AG04450 (cell line): ENCODE measurements at regions of chr1 and their contacts with region 1.

Region 1: DNA sequence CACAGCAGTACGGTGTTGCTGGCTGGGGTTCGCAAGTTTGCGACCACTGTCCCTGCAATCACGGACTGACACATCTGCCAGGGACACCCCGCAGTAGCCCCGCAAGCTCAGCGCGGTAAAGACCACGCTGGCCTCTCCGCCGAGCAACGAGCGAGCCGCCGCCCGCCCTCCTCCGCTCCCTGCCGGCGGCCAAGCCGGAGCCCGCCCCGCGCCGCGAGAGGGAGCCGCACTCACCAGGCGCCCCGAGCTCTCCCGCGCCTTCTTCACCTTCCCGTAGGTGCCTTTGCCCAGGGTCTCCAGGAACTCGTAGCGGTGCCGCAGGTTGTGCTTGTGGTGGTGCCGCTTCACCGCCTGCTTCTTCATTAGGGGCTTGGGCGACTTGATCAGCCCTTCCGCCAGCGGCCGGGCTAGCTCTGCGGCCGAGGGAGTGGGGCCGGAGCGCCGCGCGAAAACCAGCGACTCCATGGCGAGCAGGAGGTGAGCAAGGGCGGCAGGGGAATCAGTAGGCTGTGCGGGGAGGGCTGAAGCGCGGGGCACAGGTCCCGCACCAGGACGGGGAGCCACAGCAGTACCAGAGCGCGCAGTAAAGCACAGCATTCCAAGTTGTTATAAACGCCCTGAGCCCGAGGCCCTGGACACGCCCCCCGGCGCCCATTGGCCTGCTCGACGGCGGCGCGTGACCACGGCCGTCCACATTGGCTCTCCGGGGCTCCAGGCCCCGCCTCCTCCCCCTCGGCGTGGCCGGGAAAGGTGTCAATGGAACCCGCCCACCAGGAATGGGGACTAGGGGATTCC is at the start of gene NUAK2:
- DNase-seq: peak; percentile 61
- H3K4me3 ChIP-seq: peak within 1 kb of the TSS; percentile 93
- H3K27ac ChIP-seq: peak within 1 kb of the TSS; percentile 80
- H3K27me3 ChIP-seq: peaks cover 4% of the 10 kb centered on the region
- CTCF ChIP-seq: peak; percentile 41
- polyA plus RNA-seq, gene NUAK2: 7.0 and 8.2 TPM in 2 replicates

Region 2: GRCh38 chr1:205227584-205228006 is 93.8 kb before region 1 on chr1 and contains the start of gene TMCC2:
- CTCF ChIA-PET with region 1: interaction called, 16 read pairs
- POLR2A ChIA-PET with region 1: no interaction called
- DNase-seq: peak; percentile 66
- H3K4me3 ChIP-seq: peak within 1 kb of the TSS; percentile 75
- H3K27ac ChIP-seq: peak within 1 kb of the TSS; percentile 11
- H3K27me3 ChIP-seq: peaks cover 2% of the 10 kb centered on the region
- CTCF ChIP-seq: 0 out of 2 replicates have a peak, but pooled peaks have one; percentile 9
- polyA plus RNA-seq, gene TMCC2: 2.3 and 3.0 TPM in 2 replicates

Region 3: GRCh38 chr1:205273551-205273982 is 47.8 kb before region 1 on chr1:
- CTCF ChIA-PET with region 1: interaction called, 603 read pairs
- POLR2A ChIA-PET with region 1: interaction called, 16 read pairs
- DNase-seq: no peak
- H3K4me3 ChIP-seq: no peak overlapping the region
- H3K27ac ChIP-seq: no peak overlapping the region
- H3K27me3 ChIP-seq: no peaks in the 10 kb centered on the region
- CTCF ChIP-seq: peak; percentile 97

Region 4: GRCh38 chr1:205284343-205285144 is 36.8 kb before region 1 on chr1:
- CTCF ChIA-PET with region 1: interaction called, 603 read pairs
- POLR2A ChIA-PET with region 1: interaction called, 8 read pairs
- DNase-seq: peak; percentile 95
- H3K4me3 ChIP-seq: no peak overlapping the region
- H3K27ac ChIP-seq: peak overlapping the region; percentile 91
- H3K27me3 ChIP-seq: no peaks in the 10 kb centered on the region
- CTCF ChIP-seq: peak; percentile 17; the same call in 1 of the 2 replicates

Region 5: GRCh38 chr1:205294175-205294913 is 27.0 kb before region 1 on chr1:
- CTCF ChIA-PET with region 1: interaction called, 69 read pairs
- POLR2A ChIA-PET with region 1: interaction called, 10 read pairs
- DNase-seq: peak; percentile 90
- H3K4me3 ChIP-seq: no peak overlapping the region
- H3K27ac ChIP-seq: peak overlapping the region; percentile 95
- H3K27me3 ChIP-seq: no peaks in the 10 kb centered on the region
- CTCF ChIP-seq: no peak

Region 6: GRCh38 chr1:205300886-205301821 is 20.2 kb before region 1 on chr1:
- CTCF ChIA-PET with region 1: interaction called, 13 read pairs
- POLR2A ChIA-PET with region 1: interaction called, 10 read pairs
- DNase-seq: peak; percentile 92
- H3K4me3 ChIP-seq: peak overlapping the region; percentile 25; the same call in 1 of the 2 replicates
- H3K27ac ChIP-seq: peak overlapping the region; percentile 100
- H3K27me3 ChIP-seq: no peaks in the 10 kb centered on the region
- CTCF ChIP-seq: no peak